GM10248 (cell line): ENCODE measurements at regions of chr16 and their contacts with region 1.

Region 1: GRCh38 chr16:89346869-89347268 is 129.4 kb downstream of the ZNF778 start:
- DNase-seq: no peak
- CTCF ChIP-seq: no peak

Region 2: GRCh38 chr16:89357055-89357816 is 10.4 kb after region 1 on chr16:
- CTCF ChIA-PET with region 1: interaction called, 10 read pairs
- POLR2A ChIA-PET with region 1: no interaction called
- DNase-seq: no peak
- CTCF ChIP-seq: peak; percentile 5

Region 3: DNA sequence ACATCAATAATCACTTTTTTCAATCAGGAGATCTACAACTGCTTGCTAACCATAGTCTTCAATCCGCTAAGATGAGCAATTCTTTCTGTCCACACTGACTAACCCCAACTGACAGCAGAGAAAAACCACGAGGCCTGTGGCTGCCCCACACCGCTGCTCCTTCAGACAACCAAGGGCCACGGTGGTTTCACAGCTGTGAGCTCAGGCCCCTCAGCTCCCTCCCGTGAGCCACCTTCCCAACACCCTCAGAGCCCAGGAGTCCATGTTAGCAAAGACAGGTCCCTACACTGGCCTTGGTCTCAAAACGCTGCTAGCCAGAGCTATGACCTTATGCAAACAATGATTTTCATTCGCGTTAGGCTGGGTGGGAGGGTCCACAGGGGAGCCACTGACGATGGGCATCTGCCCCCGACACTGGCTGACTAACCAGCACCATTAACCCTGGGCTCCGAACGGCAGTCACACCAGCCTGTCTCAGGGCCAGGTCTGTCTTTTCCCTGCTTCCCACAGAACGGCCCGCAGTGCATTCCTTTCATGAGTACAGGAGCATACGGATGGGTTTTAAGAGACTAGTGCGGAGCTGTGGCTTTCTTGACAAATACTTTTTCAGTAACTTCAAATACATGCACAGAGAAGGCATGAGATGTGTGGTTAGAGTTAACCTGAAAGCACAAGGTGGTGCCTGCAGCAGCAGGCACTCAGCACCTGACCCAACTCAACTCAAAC is 76.2 kb after region 1 on chr16:
- CTCF ChIA-PET with region 1: no interaction called
- POLR2A ChIA-PET with region 1: no interaction called
- DNase-seq: peak; percentile 70
- CTCF ChIP-seq: no peak